Aorta (tissue), 5 donors: ENCODE measurements at regions of chr3 and their contacts with region 1.

Region 1: GRCh38 chr3:99418209-99418635 is 220.2 kb upstream of the COL8A1 start:
- DNase-seq: no peak
- ATAC-seq: no peak
- H3K4me3 ChIP-seq: no peak overlapping the region
- H3K27ac ChIP-seq: peak overlapping the region; percentile 60 to 90
- H3K4me1 ChIP-seq: peaks cover 0 to 2% of the 10 kb centered on the region in 2 donors
- H3K27me3 ChIP-seq: no peaks in the 10 kb centered on the region

Region 2: GRCh38 chr3:99355465-99355864 is 62.8 kb before region 1 on chr3:
- intact Hi-C with region 1: no loop called
- DNase-seq: no peak
- ATAC-seq: no peak
- H3K4me3 ChIP-seq: no peak overlapping the region
- H3K27ac ChIP-seq: no peak overlapping the region
- H3K4me1 ChIP-seq: peaks cover 0 to 6% of the 10 kb centered on the region in 2 donors
- H3K27me3 ChIP-seq: no peaks in the 10 kb centered on the region

Region 3: GRCh38 chr3:99499235-99500158 is 81.3 kb after region 1 on chr3:
- intact Hi-C with region 1: loop called in 1 of 2 experiments (anchors 5 kb)
- DNase-seq: no peak
- ATAC-seq: peak; percentile 75
- H3K4me3 ChIP-seq: no peak overlapping the region
- H3K27ac ChIP-seq: peak overlapping the region; percentile 87 to 99
- H3K4me1 ChIP-seq: peaks cover 9 to 11% of the 10 kb centered on the region in 2 donors
- H3K27me3 ChIP-seq: no peaks in the 10 kb centered on the region